ENCODE measurements at regions of chr5 and their contacts with region 1.

Region 1: DNA sequence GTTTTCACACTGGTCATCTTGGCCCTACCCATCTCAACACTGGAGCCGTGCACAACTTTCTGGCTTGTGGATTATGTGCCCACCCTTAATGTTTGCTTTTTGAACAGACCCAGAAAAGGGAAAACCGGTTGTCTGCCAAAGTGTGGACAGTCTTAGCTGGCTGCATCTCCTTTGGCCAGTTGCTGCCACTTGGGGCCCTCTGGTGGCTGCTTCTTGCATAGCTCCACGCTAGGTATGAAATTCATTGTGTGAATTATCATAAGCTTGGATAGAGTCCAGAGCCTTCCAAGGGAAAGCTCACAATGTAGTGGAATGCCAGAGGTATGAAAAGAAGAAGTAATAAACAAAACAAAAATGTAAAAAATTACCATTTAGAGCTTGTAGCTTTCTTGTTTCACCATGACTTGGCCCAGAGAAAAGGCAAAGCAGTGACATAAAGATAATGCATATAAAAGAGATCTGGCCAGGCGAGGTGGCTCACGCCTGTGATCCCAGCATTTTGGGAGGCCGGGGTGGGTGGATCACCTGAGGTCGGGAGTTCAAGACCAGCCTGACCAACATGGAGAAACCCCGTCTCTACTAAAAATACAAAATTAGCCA is 12.5 kb upstream of the SLC36A3 start:
- DNase-seq: peak; percentile 26
- H3K4me3 ChIP-seq: no peak overlapping the region
- H3K27ac ChIP-seq: no peak overlapping the region
- H3K27me3 ChIP-seq: no peaks in the 10 kb centered on the region
- CTCF ChIP-seq: peak; percentile 95

Region 2: DNA sequence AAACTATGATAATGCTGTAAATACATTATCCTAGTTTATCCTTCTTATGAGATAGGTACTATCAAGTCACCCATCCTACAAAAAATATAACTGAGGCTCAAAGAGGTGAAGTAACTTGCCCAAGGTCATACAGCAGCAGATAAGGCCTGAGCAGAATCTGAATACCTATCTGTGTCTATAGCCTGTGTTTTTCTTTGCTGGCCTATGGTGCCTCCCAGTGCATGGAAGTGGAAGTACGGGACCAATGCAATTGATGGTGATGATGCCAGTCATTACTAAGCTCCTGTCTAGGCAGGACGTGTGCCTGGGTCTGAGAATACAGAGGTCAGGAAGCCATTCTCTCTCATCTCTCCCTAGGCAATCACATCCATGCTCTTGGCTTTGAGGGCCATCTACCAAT is 207.2 kb after region 1 on chr5:
- CTCF ChIA-PET with region 1: interaction called, 20 read pairs
- POLR2A ChIA-PET with region 1: no interaction called
- DNase-seq: no peak
- H3K4me3 ChIP-seq: no peak overlapping the region
- H3K27ac ChIP-seq: no peak overlapping the region
- H3K27me3 ChIP-seq: peaks cover 7% of the 10 kb centered on the region
- CTCF ChIP-seq: peak; percentile 77

Measured in AG04450 (cell line).